Activated T-helper 2 cell treated with anti-CD3 and anti-CD28 coated beads, Interferon-gamma antibody, Interleukin-2, Interleukin-4, amounts not matched to agents 10 μg/mL and 5 μg/mL and 100 μg/mL, durations not matched to agents 14 hours and 24 hours and 36 hours (primary cell): ENCODE measurements at regions of chr3 and their contacts with region 1.

Region 1: GRCh38 chr3:15743587-15744009 is 54.2 kb downstream of the ANKRD28 start:
- DNase-seq: no peak
- H3K4me3 Mint-ChIP-seq: no peak overlapping the region
- H3K27ac Mint-ChIP-seq: peak overlapping the region; percentile 40
- H3K4me1 Mint-ChIP-seq: peaks cover 40% of the 10 kb centered on the region
- H3K27me3 Mint-ChIP-seq: no peaks in the 10 kb centered on the region

Region 2: GRCh38 chr3:15361494-15362212 is 381.9 kb before region 1 on chr3:
- intact Hi-C with region 1: loop called (anchors 10 kb)
- DNase-seq: peak; percentile 36
- H3K4me3 Mint-ChIP-seq: peak overlapping the region; percentile 30
- H3K27ac Mint-ChIP-seq: peak overlapping the region; percentile 81
- H3K4me1 Mint-ChIP-seq: peaks cover 36% of the 10 kb centered on the region
- H3K27me3 Mint-ChIP-seq: no peaks in the 10 kb centered on the region

Region 3: DNA sequence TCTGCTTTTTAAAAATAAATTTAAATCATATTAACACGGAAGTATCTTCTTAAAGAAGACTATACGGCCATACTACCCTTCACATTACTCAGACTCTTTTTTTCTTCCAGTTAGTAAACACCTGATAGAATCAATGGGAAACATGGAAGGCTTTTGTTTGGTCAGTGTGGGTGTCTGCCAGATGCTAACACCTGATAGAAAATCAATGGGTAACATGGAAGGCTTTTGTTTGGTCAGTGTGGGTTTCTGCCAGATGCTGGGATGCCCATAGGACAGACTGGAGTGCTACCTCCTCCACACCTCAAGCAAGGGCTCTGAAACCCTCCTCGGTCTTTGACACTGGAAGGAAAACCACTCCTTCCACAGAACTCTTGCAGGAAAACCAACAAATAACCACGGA is 171.5 kb before region 1 on chr3:
- intact Hi-C with region 1: no loop called
- DNase-seq: no peak
- H3K4me3 Mint-ChIP-seq: no peak overlapping the region
- H3K27ac Mint-ChIP-seq: no peak overlapping the region
- H3K4me1 Mint-ChIP-seq: peaks cover 10% of the 10 kb centered on the region
- H3K27me3 Mint-ChIP-seq: no peaks in the 10 kb centered on the region

Region 4: GRCh38 chr3:15636003-15636709 is 107.4 kb before region 1 on chr3:
- intact Hi-C with region 1: loop called (anchors 1 kb)
- DNase-seq: no peak
- H3K4me3 Mint-ChIP-seq: peak overlapping the region; percentile 56
- H3K27ac Mint-ChIP-seq: peak overlapping the region; percentile 87
- H3K4me1 Mint-ChIP-seq: peaks cover 59% of the 10 kb centered on the region
- H3K27me3 Mint-ChIP-seq: no peaks in the 10 kb centered on the region

Region 5: DNA sequence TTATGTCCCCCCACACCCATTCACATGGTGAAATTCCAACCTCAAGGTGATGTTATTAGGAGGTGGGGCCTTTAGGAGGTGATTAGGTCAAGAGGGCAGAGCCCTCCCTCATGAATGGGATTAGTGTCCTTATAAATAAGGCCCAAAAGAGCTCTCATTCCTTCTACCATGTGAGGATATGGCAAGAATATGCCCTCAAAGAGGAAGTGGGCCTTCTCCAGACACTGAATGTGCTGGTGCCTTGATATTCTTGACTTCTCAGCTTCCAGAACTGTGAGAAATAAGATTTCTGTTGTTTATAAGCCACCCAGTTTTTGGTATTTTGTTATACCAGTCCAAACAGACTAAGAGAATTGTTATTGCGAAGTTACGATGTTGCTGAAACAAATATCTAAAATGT is 40.3 kb before region 1 on chr3:
- intact Hi-C with region 1: no loop called
- DNase-seq: no peak
- H3K4me3 Mint-ChIP-seq: no peak overlapping the region
- H3K27ac Mint-ChIP-seq: no peak overlapping the region
- H3K4me1 Mint-ChIP-seq: peaks cover 4% of the 10 kb centered on the region
- H3K27me3 Mint-ChIP-seq: no peaks in the 10 kb centered on the region

Region 6: GRCh38 chr3:15754047-15754446 is 10.4 kb after region 1 on chr3:
- intact Hi-C with region 1: loop called (anchors 1 kb)
- DNase-seq: no peak
- H3K4me3 Mint-ChIP-seq: no peak overlapping the region
- H3K27ac Mint-ChIP-seq: no peak overlapping the region
- H3K4me1 Mint-ChIP-seq: peaks cover 32% of the 10 kb centered on the region
- H3K27me3 Mint-ChIP-seq: no peaks in the 10 kb centered on the region

Region 7: DNA sequence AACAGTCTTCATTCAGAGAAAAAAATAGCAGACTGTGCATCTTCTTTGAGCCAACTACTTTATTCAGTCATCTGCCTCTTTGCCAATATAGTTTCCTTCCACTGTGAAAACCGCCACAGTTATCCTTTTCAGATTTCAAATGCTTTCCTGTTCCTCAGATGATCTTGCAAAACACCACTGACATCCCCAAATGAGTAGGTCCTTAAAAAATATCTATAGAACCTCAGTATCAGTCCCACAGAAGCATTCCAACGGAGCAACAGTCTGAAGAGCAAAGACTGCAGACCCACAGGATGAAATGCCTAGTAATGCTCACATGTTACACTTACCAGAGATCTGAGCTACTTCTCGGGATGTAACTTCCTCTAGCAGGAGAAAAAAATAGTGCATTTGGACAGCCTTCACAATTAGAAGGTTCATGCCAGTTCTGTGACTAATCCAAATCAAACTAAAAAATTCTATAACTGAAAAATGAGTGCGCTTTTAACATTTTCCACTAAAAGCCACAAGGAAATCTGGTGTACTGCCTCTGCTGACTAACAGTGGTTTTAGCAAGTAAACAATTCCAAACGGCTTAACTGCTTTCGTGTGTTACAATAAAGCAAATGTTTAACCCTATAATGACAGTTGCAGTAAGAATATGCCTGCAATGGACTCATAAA is 54.2 kb after region 1 on chr3 and contains the start of gene ANKRD28:
- intact Hi-C with region 1: loop called (anchors 1 kb)
- DNase-seq: no peak
- H3K4me3 Mint-ChIP-seq: peak within 1 kb of the TSS; percentile 81
- H3K27ac Mint-ChIP-seq: peak within 1 kb of the TSS; percentile 92
- H3K4me1 Mint-ChIP-seq: peaks cover 77% of the 10 kb centered on the region
- H3K27me3 Mint-ChIP-seq: no peaks in the 10 kb centered on the region
- total RNA-seq, gene ANKRD28: 44.2 and 45.5 TPM in 2 replicates

Region 8: GRCh38 chr3:15831930-15832329 is 88.3 kb after region 1 on chr3:
- intact Hi-C with region 1: no loop called
- DNase-seq: no peak
- H3K4me3 Mint-ChIP-seq: no peak overlapping the region
- H3K27ac Mint-ChIP-seq: no peak overlapping the region
- H3K4me1 Mint-ChIP-seq: no peaks in the 10 kb centered on the region
- H3K27me3 Mint-ChIP-seq: no peaks in the 10 kb centered on the region